Activated CD8-positive, alpha-beta T cell treated with anti-CD3 and anti-CD28 coated beads for 36 hours (primary cell): ENCODE measurements at regions of chr9 and their contacts with region 1.

Region 1: DNA sequence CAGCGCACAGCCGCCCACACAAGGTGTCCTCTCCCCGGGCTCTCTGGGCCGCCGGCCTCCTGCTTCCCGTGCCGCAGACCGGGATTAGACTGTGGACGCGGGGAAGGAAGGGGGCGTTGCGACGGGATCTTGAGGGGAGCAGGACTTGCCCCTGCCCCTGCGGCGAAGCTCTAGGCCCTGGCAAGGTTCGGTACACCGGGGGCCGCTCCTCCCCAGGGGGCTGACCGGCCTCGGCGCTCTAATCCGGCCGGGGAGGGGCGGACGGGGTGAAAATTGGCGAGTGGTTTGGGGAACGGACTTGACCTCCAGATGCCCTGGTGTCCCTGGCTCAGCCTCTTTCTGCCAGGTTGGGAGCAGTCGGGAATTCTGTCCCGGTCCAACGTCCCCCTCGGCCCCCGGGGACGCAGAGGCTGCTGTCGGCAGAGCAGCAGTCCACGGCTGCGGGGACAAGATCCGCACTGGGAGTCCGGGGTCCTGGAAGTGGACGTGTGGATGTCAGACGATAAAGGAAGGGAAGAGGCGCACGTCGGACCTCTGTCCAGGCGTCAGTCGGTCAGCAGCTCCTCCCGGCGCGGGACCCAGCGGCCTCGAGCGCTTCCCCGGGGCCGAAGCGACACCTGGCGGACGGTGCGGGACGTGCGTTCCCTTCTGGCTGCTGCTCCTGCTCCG is 1.9 kb upstream of the CNTFR start:
- DNase-seq: peak; percentile 84
- ATAC-seq: peak; percentile 85
- H3K4me3 Mint-ChIP-seq: peak overlapping the region; percentile 53
- H3K27ac Mint-ChIP-seq: no peak overlapping the region
- H3K4me1 Mint-ChIP-seq: peaks cover 23% of the 10 kb centered on the region
- H3K27me3 Mint-ChIP-seq: peaks cover 57% of the 10 kb centered on the region
- CTCF ChIP-seq: peak; percentile 97

Region 2: DNA sequence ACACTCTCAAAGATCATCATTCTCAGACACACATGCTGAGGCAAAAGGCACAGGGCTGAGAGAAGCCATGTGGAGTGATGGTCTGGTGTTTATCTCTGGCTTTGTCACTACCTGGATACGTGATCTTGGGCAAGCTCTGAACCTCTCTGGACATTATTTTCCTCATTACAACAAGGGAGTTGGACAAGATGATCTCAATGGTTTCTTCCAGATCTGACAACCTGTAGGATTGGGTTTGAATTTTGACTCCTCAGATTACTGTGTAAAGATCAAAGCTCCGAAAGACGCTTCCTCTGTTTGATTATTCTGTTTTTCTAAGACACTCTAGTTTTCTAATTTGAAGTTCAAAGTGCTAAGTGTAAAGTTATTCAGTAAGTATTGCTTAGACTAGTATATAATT is 242.1 kb before region 1 on chr9:
- CTCF ChIA-PET with region 1: no interaction called
- POLR2A ChIA-PET with region 1: no interaction called
- intact Hi-C with region 1: no loop called
- DNase-seq: no peak
- ATAC-seq: no peak
- H3K4me3 Mint-ChIP-seq: no peak overlapping the region
- H3K27ac Mint-ChIP-seq: no peak overlapping the region
- H3K4me1 Mint-ChIP-seq: no peaks in the 10 kb centered on the region
- H3K27me3 Mint-ChIP-seq: no peaks in the 10 kb centered on the region
- CTCF ChIP-seq: no peak

Region 3: GRCh38 chr9:34437006-34437925 is 154.1 kb before region 1 on chr9:
- CTCF ChIA-PET with region 1: interaction called, 12 read pairs
- POLR2A ChIA-PET with region 1: no interaction called
- intact Hi-C with region 1: loop called (anchors 5 kb)
- DNase-seq: peak; percentile 81
- ATAC-seq: peak; percentile 99
- H3K4me3 Mint-ChIP-seq: no peak overlapping the region
- H3K27ac Mint-ChIP-seq: no peak overlapping the region
- H3K4me1 Mint-ChIP-seq: peaks cover 7% of the 10 kb centered on the region
- H3K27me3 Mint-ChIP-seq: no peaks in the 10 kb centered on the region
- CTCF ChIP-seq: peak; percentile 82

Region 4: GRCh38 chr9:34546834-34547827 is 44.3 kb before region 1 on chr9:
- CTCF ChIA-PET with region 1: interaction called, 24 read pairs
- POLR2A ChIA-PET with region 1: no interaction called
- intact Hi-C with region 1: loop called (anchors 5 kb)
- DNase-seq: peak; percentile 89
- ATAC-seq: peak; percentile 83
- H3K4me3 Mint-ChIP-seq: no peak overlapping the region
- H3K27ac Mint-ChIP-seq: no peak overlapping the region
- H3K4me1 Mint-ChIP-seq: no peaks in the 10 kb centered on the region
- H3K27me3 Mint-ChIP-seq: peaks cover 15% of the 10 kb centered on the region
- CTCF ChIP-seq: peak; percentile 49

Region 5: GRCh38 chr9:34578241-34579103 is 12.9 kb before region 1 on chr9:
- CTCF ChIA-PET with region 1: interaction called, 22 read pairs
- POLR2A ChIA-PET with region 1: no interaction called
- intact Hi-C with region 1: no loop called
- DNase-seq: peak; percentile 30
- ATAC-seq: peak; percentile 74
- H3K4me3 Mint-ChIP-seq: no peak overlapping the region
- H3K27ac Mint-ChIP-seq: no peak overlapping the region
- H3K4me1 Mint-ChIP-seq: peaks cover 6% of the 10 kb centered on the region
- H3K27me3 Mint-ChIP-seq: peaks cover 48% of the 10 kb centered on the region
- CTCF ChIP-seq: no peak

Region 6: GRCh38 chr9:34611829-34612630 is 20.6 kb after region 1 on chr9 and contains the start of gene RPP25L:
- CTCF ChIA-PET with region 1: interaction called, 16 read pairs
- POLR2A ChIA-PET with region 1: no interaction called
- intact Hi-C with region 1: no loop called
- DNase-seq: peak; percentile 86
- ATAC-seq: peak; percentile 97
- H3K4me3 Mint-ChIP-seq: peak within 1 kb of the TSS; percentile 87
- H3K27ac Mint-ChIP-seq: peak within 1 kb of the TSS; percentile 92
- H3K4me1 Mint-ChIP-seq: peaks cover 20% of the 10 kb centered on the region
- H3K27me3 Mint-ChIP-seq: no peaks in the 10 kb centered on the region
- CTCF ChIP-seq: no peak
- total RNA-seq, gene RPP25L: 37.9 to 38.7 TPM

Region 7: GRCh38 chr9:34637356-34638137 is 46.2 kb after region 1 on chr9 and contains the start of gene SIGMAR1:
- CTCF ChIA-PET with region 1: interaction called, 17 read pairs
- POLR2A ChIA-PET with region 1: no interaction called
- intact Hi-C with region 1: no loop called
- DNase-seq: peak; percentile 92
- ATAC-seq: peak; percentile 95
- H3K4me3 Mint-ChIP-seq: peak within 1 kb of the TSS; percentile 94
- H3K27ac Mint-ChIP-seq: peak within 1 kb of the TSS; percentile 90
- H3K4me1 Mint-ChIP-seq: peaks cover 36% of the 10 kb centered on the region
- H3K27me3 Mint-ChIP-seq: no peaks in the 10 kb centered on the region
- CTCF ChIP-seq: no peak
- total RNA-seq, gene SIGMAR1: 80.7 to 81.2 TPM

Region 8: DNA sequence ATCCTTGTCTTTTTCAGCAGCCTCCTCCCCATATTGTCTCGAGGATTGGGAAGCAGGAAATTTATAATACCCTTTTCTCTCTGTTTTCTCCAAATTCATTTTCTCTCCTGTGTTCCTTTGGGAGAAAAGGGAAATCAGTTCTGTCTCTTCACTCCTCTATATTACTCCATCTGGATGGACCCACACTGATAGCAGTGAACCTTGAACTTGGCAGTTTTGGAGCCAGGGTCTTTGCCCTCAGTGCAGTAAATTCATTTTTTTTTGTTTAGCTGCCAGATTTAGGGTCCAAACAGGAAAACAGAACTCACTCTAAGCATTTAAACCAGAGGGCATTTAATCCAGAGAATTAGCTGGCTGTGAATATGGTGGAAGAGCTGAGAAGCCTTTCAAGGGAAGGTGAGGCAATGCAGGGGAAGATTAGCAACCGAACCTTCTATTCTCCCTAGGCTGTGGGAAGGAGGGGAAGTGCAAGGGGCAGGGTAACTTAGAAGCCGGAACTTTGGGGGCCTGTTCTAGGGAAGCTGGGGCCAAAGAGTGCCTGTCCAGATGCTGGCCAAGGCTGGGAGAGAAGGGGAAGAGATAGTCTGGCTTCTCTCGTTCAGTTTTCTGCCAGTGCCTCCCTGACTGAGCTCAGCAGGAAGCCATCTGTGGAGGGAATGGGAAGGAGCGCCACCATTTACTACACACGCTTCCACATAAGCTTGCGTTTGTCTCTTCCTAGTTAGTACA is 1183.7 kb after region 1 on chr9:
- CTCF ChIA-PET with region 1: no interaction called
- POLR2A ChIA-PET with region 1: no interaction called
- intact Hi-C with region 1: no loop called
- DNase-seq: no peak
- ATAC-seq: no peak
- H3K4me3 Mint-ChIP-seq: no peak overlapping the region
- H3K27ac Mint-ChIP-seq: no peak overlapping the region
- H3K4me1 Mint-ChIP-seq: peaks cover 6% of the 10 kb centered on the region
- H3K27me3 Mint-ChIP-seq: no peaks in the 10 kb centered on the region
- CTCF ChIP-seq: no peak